Colonic mucosa (tissue), 4 donors: ENCODE measurements at regions of chr12 and their contacts with region 1.

Region 1: DNA sequence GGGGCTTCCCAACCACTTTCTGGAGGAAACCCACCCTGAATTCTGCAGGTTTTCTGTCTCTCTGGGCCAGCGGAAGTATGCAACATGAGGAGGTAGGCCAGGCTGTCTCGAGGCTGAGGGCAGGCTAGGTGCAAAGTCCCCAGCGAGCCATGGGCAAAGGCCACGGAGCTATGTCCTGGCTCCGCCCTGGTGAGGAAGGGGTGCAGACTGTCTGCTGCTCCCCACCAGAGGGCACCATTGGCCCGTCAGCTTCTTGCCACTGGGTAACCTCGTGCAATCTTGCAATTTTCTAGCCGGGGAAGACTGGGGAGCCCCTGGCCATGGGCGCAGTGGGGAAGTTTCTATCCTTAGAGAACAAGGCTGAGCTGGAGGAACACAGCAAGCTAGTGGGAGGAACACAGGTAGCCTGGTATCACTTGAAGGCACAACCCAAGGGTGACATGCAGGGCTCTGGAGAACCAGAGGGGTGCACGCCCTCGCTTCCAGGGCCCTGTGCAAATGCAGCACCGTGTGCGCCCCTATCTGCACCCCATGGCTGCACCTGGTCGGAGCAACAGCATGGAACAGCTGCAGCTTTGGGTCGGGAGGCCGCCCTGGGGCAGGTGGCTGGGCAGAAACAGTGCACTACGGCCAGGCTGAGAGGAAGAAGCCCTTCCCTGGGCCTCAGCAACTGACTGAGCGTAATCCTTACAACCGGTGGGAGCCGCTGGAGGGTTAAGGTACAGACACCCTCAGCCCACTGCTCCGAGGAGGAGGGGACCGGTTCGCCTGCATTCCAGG is 27.6 kb upstream of the RPLP0 start:
- DNase-seq: peak; percentile 96
- H3K4me3 ChIP-seq: no peak overlapping the region
- H3K27ac ChIP-seq: peak overlapping the region; percentile 86
- H3K4me1 ChIP-seq: peaks cover 53% of the 10 kb centered on the region
- H3K27me3 ChIP-seq: no peaks in the 10 kb centered on the region
- CTCF ChIP-seq: peak; percentile 95

Region 2: DNA sequence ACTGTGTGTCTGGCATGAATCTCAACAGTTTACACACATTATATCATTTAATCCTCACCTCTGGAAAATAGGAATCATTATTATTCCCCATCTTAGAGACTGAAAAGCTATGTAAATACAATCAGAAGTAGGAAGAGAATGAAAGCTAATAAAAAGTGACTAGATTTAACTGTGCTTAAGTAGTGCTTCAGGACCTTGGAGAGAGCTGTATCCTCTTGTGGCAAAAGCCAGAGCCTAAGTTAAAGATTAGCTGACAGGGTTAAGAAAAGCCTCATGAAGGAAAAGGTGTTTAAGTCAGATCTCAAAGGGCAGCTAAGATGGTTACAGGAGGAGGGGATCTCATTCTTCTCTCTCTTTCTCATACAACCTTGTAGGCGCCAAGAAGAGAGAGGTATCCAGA is 700.2 kb before region 1 on chr12:
- intact Hi-C with region 1: no loop called
- DNase-seq: no peak
- H3K4me3 ChIP-seq: no peak overlapping the region
- H3K27ac ChIP-seq: no peak overlapping the region
- H3K4me1 ChIP-seq: no peaks in the 10 kb centered on the region
- H3K27me3 ChIP-seq: no peaks in the 10 kb centered on the region
- CTCF ChIP-seq: no peak

Region 3: GRCh38 chr12:120156315-120157259 is 71.9 kb before region 1 on chr12:
- intact Hi-C with region 1: no loop called
- DNase-seq: no peak
- H3K4me3 ChIP-seq: no peak overlapping the region
- H3K27ac ChIP-seq: no peak overlapping the region
- H3K4me1 ChIP-seq: no peaks in the 10 kb centered on the region
- H3K27me3 ChIP-seq: no peaks in the 10 kb centered on the region
- CTCF ChIP-seq: no peak

Region 4: GRCh38 chr12:120265473-120266179 is 37.1 kb after region 1 on chr12 and contains the start of gene PXN:
- intact Hi-C with region 1: loop called (anchors 2 kb)
- DNase-seq: peak; percentile 91
- H3K4me3 ChIP-seq: peak within 1 kb of the TSS; percentile 95
- H3K27ac ChIP-seq: peak within 1 kb of the TSS; percentile 78
- H3K4me1 ChIP-seq: peaks cover 26% of the 10 kb centered on the region
- H3K27me3 ChIP-seq: no peaks in the 10 kb centered on the region
- CTCF ChIP-seq: peak; percentile 76
- total RNA-seq, gene PXN: 133 to 142 TPM